B cell (primary cell): ENCODE measurements at regions of chr14 and their contacts with region 1.

Region 1: DNA sequence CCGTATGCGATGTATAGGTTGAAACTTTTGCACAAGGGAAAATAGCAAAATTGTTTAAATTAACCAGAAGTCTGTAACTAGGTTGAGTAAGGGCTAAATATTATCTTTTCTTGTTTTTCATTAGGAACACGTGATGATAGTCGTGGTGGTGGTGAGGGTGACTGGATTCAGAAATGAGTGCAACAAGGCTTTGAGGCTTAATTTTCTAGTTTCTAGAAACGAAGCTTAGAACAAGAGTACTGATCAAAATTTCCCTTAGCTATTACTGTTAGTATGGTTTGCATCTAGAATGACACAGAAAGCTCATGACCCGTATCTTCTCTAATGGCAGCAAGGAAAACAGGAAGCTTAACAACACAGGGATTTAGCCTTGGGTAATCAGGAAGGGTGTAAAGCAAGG is 7.0 kb downstream of the SLIRP start:
- DNase-seq: no peak
- ATAC-seq: no peak
- H3K4me3 ChIP-seq: no peak overlapping the region
- H3K4me3 Mint-ChIP-seq: no peak overlapping the region
- H3K27ac ChIP-seq: no peak overlapping the region
- H3K27ac Mint-ChIP-seq: peak overlapping the region; percentile 26
- H3K4me1 ChIP-seq: peaks cover 0 to 2% of the 10 kb centered on the region in 2 donors
- H3K4me1 Mint-ChIP-seq: peaks cover 6% of the 10 kb centered on the region
- H3K27me3 ChIP-seq: no peaks in the 10 kb centered on the region
- H3K27me3 Mint-ChIP-seq: no peaks in the 10 kb centered on the region
- CTCF ChIP-seq: no peak

Region 2: DNA sequence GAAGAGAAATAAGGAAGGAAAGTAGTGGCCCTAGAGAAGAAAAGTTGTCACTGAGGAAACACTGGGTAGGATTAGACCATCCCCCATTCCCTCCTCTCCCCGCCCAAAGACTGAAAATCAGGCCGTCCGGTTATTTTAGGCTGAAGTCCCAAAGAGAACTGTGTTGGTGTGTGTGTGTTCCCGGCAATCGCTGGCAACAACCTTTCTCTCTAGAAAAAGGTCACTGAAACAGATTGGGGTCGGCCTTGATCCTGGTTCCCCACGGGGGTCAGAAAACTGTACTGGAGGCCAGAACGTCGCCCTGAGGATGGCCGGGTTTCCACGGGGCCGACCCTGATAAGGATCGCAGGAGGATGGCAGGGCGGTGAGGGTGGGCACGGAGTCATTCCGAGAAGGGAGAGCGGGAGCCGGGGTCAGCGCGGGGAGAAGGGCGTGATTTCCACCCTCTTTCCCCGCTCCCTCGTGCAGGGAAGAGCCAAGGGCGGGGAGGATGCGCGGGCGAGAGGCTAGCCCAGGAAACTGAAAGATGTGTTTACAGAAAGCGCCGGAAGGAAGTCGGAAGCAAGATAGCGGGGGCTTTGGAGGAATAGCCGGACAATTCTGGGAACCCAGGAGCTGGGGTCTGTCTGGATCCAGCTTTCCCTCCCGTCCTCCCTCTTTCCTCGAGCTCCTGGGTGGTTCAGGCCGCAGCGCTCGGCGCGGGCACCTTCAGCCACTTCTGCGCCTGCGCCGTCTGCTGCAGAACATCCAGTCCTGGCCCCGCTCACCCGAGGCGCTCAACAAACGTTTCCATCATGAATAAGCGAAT is 73.2 kb before region 1 on chr14:
- CTCF ChIA-PET with region 1: no interaction called
- POLR2A ChIA-PET with region 1: interaction called, 14 read pairs
- intact Hi-C with region 1: no loop called
- DNase-seq: peak; percentile 72
- ATAC-seq: peak; percentile 70
- H3K4me3 ChIP-seq: peak overlapping the region; percentile 41 to 87 (median 75)
- H3K4me3 Mint-ChIP-seq: peak overlapping the region; percentile 96
- H3K27ac ChIP-seq: peak overlapping the region; percentile 73 to 81
- H3K27ac Mint-ChIP-seq: peak overlapping the region; percentile 95
- H3K4me1 ChIP-seq: peaks cover 7 to 17% of the 10 kb centered on the region in 2 donors
- H3K4me1 Mint-ChIP-seq: peaks cover 16% of the 10 kb centered on the region
- H3K27me3 ChIP-seq: no peaks in the 10 kb centered on the region
- H3K27me3 Mint-ChIP-seq: no peaks in the 10 kb centered on the region
- CTCF ChIP-seq: no peak